PC-3 (cell line): ENCODE measurements at regions of chr5 and their contacts with region 1.

Region 1: GRCh38 chr5:137352095-137352494 is 147.0 kb downstream of the SPOCK1 start:
- DNase-seq: peak; percentile 53
- ATAC-seq: peak; percentile 89
- H3K4me3 ChIP-seq: no peak overlapping the region; the same call in 1 of the 2 replicates
- H3K27ac ChIP-seq: no peak overlapping the region
- H3K4me1 ChIP-seq: peaks cover 14% of the 10 kb centered on the region
- H3K27me3 ChIP-seq: no peaks in the 10 kb centered on the region
- CTCF ChIP-seq: no peak

Region 2: GRCh38 chr5:137470111-137470920 is 118.2 kb after region 1 on chr5:
- CTCF ChIA-PET with region 1: no interaction called
- POLR2A ChIA-PET with region 1: no interaction called
- intact Hi-C with region 1: loop called (anchors 2 kb)
- DNase-seq: peak; percentile 94
- ATAC-seq: peak; percentile 97
- H3K4me3 ChIP-seq: no peak overlapping the region
- H3K27ac ChIP-seq: peak overlapping the region; percentile 83
- H3K4me1 ChIP-seq: peaks cover 22% of the 10 kb centered on the region
- H3K27me3 ChIP-seq: no peaks in the 10 kb centered on the region
- CTCF ChIP-seq: no peak